Dorsolateral prefrontal cortex (tissue), 120 donors: ENCODE measurements at regions of chr16 and their contacts with region 1.

Region 1: DNA sequence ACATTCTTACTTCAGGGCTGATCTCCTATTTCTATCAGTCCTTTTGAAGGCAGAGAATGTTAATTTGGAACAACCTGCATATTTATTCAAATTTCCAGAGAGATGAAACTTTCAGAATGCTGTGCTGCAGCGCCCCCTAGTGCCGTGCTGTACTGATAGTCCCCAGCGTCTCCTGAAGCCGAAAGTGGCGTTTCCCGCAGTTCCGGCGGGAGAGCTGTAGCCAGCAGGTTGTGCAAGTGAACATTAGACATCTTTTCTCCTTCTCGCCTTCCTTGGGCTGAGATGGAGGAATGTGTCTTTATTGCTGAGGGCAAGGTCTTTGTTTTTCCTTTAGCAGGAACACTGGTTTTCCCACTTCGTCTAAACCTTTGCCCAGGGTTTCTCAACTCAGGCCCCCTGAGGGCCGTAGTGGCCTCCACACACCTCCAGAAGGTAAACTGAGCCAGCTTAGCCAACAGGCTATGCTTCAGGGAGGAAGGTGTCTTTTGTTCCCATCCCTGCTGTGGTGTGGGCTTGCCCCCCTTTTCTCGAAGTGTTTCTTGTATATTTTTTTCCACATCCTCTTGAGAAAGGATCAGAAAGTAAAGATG is 26.4 kb downstream of the USP10 start:
- DNase-seq: peak; percentile 83 to 96 (median 91)
- H3K4me3 ChIP-seq: peak overlapping the region in 16 of 59 donors; percentile 1 to 29 (median 11)
- H3K27ac ChIP-seq: peak overlapping the region in 38 of 59 donors; percentile 1 to 81 (median 49)
- H3K27me3 ChIP-seq: no peaks in the 10 kb centered on the region
- CTCF ChIP-seq: peak; percentile 92 to 99 (median 96)

Region 2: DNA sequence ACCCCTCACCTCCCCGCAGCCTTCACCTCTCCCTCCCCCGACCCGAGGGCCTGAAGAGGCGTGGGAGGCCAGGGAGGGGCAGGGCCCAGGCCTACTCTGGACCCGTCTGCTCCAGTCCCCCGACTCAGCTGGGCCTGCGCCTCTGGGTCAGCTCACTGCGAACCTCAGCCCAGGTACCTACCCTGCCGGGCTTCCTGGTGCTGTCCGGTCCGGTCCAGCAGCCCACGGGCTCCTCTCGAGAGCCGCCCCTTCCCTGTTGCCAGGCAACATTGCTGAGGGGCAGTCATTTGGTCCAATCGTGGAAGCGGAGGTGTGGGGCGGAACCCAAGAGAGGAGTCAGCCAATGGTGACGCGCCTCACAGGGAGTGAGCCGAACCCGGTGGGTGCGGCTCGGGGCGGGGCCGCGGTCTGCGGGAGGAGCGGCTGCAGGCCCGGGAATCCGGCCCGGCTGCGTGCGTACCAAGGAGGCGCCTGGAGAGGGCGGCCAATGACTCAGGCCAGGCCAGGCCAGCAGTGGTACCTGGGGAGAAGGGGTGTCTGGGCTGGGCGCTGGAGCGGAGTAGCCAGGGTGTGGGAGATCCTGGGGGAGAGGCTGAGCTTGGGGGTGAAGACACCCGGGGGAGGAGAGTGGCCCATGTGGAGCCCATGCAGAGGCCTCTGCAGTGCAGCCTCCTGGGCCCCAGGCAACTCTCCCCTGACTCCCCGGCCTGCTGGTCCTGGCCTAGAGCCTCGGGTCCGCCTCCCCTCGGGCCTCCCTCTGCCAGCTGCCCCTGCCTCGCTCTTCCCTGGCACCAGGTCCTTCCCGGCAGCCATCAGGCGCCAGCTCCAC is 221.5 kb before region 1 on chr16 and contains the start of gene MEAK7:
- intact Hi-C with region 1: loop called in 1 of 2 experiments (anchors 2 kb)
- DNase-seq: peak; percentile 96 to 99 (median 99)
- H3K4me3 ChIP-seq: peak within 1 kb of the TSS; percentile 55 to 92 (median 81)
- H3K27ac ChIP-seq: peak within 1 kb of the TSS in 56 of 59 donors; percentile 9 to 90 (median 76)
- H3K27me3 ChIP-seq: no peaks in the 10 kb centered on the region
- CTCF ChIP-seq: peak in 28 of 56 donors; percentile 6 to 57 (median 30)
- total RNA-seq, gene MEAK7: 12.5 to 34.5 (median 20.1) TPM

Region 3: GRCh38 chr16:84617791-84618580 is 108.2 kb before region 1 on chr16 and contains the start of gene COTL1:
- intact Hi-C with region 1: loop called (anchors 5 to 10 kb)
- DNase-seq: peak; percentile 88 to 98 (median 96)
- H3K4me3 ChIP-seq: peak within 1 kb of the TSS; percentile 62 to 95 (median 84)
- H3K27ac ChIP-seq: peak within 1 kb of the TSS in 47 of 59 donors; percentile 4 to 86 (median 67)
- H3K27me3 ChIP-seq: no peaks in the 10 kb centered on the region
- CTCF ChIP-seq: peak in 5 of 56 donors; percentile 4 to 34 (median 13)
- total RNA-seq, gene COTL1: 43.3 to 111 (median 76.2) TPM

Region 4: DNA sequence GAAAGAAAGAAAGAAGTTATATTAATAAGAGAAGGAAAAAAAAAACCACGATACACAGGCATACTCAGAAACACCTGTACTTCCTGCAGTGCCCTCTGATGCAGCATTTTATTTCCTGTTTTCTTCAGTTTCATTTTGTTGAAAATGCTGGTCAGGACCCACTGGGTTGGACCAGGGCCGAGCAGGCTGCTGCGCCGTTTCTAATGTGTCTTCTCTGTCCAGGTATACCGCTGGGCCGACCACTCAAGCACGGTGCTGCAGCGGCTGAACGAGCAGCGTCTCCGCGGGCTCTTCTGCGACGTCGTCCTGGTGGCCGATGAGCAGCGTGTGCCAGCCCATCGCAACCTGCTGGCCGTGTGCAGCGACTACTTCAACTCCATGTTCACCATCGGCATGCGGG is 69.5 kb before region 1 on chr16:
- intact Hi-C with region 1: no loop called
- DNase-seq: no peak
- H3K4me3 ChIP-seq: no peak overlapping the region
- H3K27ac ChIP-seq: no peak overlapping the region
- H3K27me3 ChIP-seq: no peaks in the 10 kb centered on the region
- CTCF ChIP-seq: no peak

Region 5: GRCh38 chr16:84672276-84673202 is 53.6 kb before region 1 on chr16:
- intact Hi-C with region 1: loop called (anchors 2 to 5 kb)
- DNase-seq: peak in 9 of 10 donors; percentile 50 to 79 (median 64)
- H3K4me3 ChIP-seq: no peak overlapping the region
- H3K27ac ChIP-seq: no peak overlapping the region
- H3K27me3 ChIP-seq: no peaks in the 10 kb centered on the region
- CTCF ChIP-seq: peak; percentile 46 to 92 (median 88)

Region 6: GRCh38 chr16:84699712-84700445 is 26.3 kb before region 1 on chr16 and contains the start of gene USP10:
- intact Hi-C with region 1: loop called in 1 of 2 experiments (anchors 2 kb)
- DNase-seq: peak; percentile 48 to 88 (median 66)
- H3K4me3 ChIP-seq: peak within 1 kb of the TSS; percentile 73 to 99 (median 94)
- H3K27ac ChIP-seq: peak within 1 kb of the TSS in 54 of 59 donors; percentile 23 to 90 (median 73)
- H3K27me3 ChIP-seq: no peaks in the 10 kb centered on the region
- CTCF ChIP-seq: peak in 2 of 56 donors; percentile 12
- total RNA-seq, gene USP10: 58.1 to 104 (median 76.8) TPM